IMR-90 (cell line): ENCODE measurements at regions of chr10 and their contacts with region 1.

Region 1: DNA sequence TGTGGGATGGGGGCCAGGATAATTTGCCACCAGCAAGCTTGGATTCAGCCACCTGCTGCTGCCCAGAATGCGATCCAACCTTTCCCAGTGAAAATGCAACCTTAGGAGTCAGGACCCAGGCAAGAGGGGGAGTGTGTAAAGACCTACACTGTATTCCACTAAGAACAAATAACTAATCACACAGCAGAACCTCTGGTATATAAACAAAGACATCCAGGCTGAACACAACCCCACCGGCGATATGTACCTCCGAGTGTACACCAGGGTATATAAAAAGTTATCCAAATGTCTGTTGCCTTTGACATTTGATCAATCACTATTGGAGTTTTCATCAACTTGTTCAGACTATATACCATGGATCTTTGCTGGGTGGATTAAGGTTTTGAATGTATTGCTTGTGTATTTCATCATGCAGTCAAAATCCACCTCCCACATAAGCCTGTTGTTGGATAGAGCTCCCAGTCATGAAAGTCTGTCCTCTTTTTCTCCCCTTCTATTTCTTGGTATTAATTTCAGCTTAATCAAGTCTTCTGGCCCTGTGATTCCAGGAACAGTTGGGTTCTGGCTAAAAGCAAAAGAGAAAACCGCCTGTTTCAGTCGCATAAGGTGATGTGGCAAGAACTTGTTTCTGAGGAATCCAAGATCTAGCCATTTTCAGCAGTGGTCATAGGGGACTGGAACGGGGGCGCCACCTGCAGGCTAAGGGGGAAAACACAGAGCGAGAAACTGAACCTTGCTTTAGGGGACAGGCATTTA is 290.7 kb downstream of the CCDC3 start:
- DNase-seq: peak; percentile 87
- ATAC-seq: peak; percentile 52
- H3K4me3 ChIP-seq: no peak overlapping the region
- H3K27ac ChIP-seq: peak overlapping the region; percentile 85; the same call in 1 of the 2 replicates
- H3K4me1 ChIP-seq: peaks cover 28% of the 10 kb centered on the region
- H3K27me3 ChIP-seq: no peaks in the 10 kb centered on the region
- CTCF ChIP-seq: peak; percentile 96
- POLR2A ChIP-seq: no peak; the same call in 1 of the 2 replicates
- RAD21 ChIP-seq: peak; percentile 91

Region 2: DNA sequence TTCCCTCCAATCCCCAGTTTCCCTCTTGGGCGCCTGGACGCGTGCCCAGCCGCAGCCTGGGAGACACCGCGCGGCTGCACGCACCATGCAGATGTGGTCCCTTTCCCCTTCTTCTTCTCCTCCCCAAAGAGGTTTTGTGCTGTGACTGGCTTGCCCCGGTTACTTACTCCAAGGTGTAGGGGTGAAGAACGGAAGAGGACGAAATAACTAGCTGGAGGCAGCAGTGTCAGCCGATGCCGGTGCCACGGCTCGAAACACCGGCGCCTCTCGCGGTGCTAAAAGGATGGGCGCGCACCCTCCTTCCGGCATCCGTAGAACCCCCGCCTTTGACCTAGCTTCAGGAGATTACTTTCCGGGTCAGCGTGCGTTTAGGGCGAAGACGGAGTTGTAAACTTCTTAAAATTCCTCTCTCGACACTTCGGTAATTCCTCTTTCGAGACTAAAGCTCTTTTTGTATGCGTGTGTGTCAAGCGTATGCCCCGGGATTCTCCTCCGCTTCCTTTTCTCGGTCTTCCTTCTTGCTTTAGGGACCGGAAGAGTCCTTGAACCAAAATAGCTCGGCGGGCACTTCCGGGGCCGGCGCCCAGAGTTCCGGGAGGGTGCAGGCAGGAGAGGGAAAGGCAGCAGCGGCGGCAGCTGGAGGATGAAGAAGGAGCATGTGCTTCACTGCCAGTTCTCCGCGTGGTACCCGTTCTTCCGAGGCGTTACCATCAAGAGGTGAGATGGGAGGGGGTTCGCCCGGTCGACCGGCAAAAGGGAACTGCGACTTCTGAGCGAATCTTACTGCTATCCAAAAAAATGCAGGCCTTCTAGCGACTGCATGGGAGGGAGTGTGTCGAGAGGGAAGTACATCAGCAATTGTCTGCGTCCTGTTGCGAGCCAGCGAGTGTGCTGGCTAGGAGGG is 514.9 kb before region 1 on chr10 and contains the starts of genes CDC123 and NUDT5:
- CTCF ChIA-PET with region 1: no interaction called
- POLR2A ChIA-PET with region 1: no interaction called
- dilution Hi-C with region 1: no loop called
- in situ Hi-C with region 1: no loop called
- intact Hi-C with region 1: loop called (anchors 5 kb)
- DNase-seq: peak; percentile 88
- ATAC-seq: peak; percentile 93
- H3K4me3 ChIP-seq: peak within 1 kb of the TSS; percentile 86
- H3K27ac ChIP-seq: peak within 1 kb of the TSS; percentile 91
- H3K4me1 ChIP-seq: peaks cover 7% of the 10 kb centered on the region; the same call in 1 of the 2 replicates
- H3K27me3 ChIP-seq: no peaks in the 10 kb centered on the region
- CTCF ChIP-seq: no peak
- POLR2A ChIP-seq: no peak
- RAD21 ChIP-seq: peak; percentile 14; the same call in 1 of the 2 replicates
- total RNA-seq, gene CDC123: 171 and 203 TPM in 2 replicates
- total RNA-seq, gene NUDT5: 70.1 and 74.2 TPM in 2 replicates

Region 3: DNA sequence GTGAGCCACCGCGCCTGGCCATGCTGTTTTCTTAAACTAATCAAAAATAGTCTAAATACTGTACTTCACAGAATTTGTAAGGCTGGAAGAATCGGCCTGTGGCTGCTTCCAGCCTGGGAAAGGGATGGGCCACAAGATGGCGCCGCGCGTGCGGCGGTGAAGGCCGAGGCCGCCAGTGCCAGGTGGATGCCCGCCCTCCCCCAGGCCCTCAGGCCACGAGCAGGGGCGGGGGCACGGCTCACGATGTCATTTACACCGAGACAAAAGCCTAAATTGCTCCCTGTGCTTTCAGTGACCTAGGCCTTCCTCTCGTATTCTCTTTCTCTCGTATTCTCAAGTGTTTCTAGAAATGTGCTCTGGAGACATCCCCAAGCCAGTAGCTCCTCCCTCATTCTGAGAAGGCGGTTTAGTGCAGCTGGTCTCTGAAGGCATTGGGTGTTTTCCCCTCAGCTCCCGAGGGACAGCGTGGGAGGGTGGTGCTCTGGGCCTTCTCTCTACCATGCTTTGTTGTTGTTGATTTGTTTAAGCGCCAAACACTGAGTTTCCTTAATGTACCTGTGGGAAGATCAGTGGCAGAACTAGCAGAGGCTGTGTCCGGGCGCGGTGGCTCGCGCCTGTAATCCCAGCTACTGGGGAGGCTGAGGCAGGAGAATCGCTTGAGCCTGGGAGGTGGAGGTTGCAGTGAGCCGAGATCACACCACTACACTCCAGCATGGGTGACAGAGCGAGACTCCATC is 446.4 kb before region 1 on chr10:
- CTCF ChIA-PET with region 1: interaction called, 12 read pairs
- POLR2A ChIA-PET with region 1: no interaction called
- dilution Hi-C with region 1: no loop called
- in situ Hi-C with region 1: loop called (anchors 5 kb)
- intact Hi-C with region 1: loop called (anchors 1 kb)
- DNase-seq: peak; percentile 69
- ATAC-seq: peak; percentile 99
- H3K4me3 ChIP-seq: peak overlapping the region; percentile 48
- H3K27ac ChIP-seq: no peak overlapping the region
- H3K4me1 ChIP-seq: no peaks in the 10 kb centered on the region
- H3K27me3 ChIP-seq: no peaks in the 10 kb centered on the region
- CTCF ChIP-seq: peak; percentile 94
- POLR2A ChIP-seq: peak; percentile 61; the same call in 1 of the 2 replicates
- RAD21 ChIP-seq: peak; percentile 98

Region 4: GRCh38 chr10:12902135-12902572 is 191.4 kb after region 1 on chr10:
- CTCF ChIA-PET with region 1: interaction called, 4 read pairs
- POLR2A ChIA-PET with region 1: no interaction called
- dilution Hi-C with region 1: no loop called
- in situ Hi-C with region 1: no loop called
- intact Hi-C with region 1: loop called (anchors 2 kb)
- DNase-seq: peak; percentile 64
- ATAC-seq: peak; percentile 75
- H3K4me3 ChIP-seq: no peak overlapping the region
- H3K27ac ChIP-seq: no peak overlapping the region
- H3K4me1 ChIP-seq: no peaks in the 10 kb centered on the region
- H3K27me3 ChIP-seq: peaks cover 4% of the 10 kb centered on the region; the same call in 1 of the 2 replicates
- CTCF ChIP-seq: peak; percentile 81
- POLR2A ChIP-seq: no peak
- RAD21 ChIP-seq: peak; percentile 81

Region 5: GRCh38 chr10:13074561-13075451 is 364.0 kb after region 1 on chr10:
- CTCF ChIA-PET with region 1: no interaction called
- POLR2A ChIA-PET with region 1: no interaction called
- dilution Hi-C with region 1: no loop called
- in situ Hi-C with region 1: loop called (anchors 25 kb)
- intact Hi-C with region 1: loop called (anchors 5 kb)
- DNase-seq: peak; percentile 60
- ATAC-seq: peak; percentile 95
- H3K4me3 ChIP-seq: no peak overlapping the region
- H3K27ac ChIP-seq: no peak overlapping the region
- H3K4me1 ChIP-seq: no peaks in the 10 kb centered on the region
- H3K27me3 ChIP-seq: 0 out of 2 replicates have a peak, but pooled peaks cover 2% of the 10 kb centered on the region
- CTCF ChIP-seq: peak; percentile 87
- POLR2A ChIP-seq: no peak
- RAD21 ChIP-seq: peak; percentile 94